MCF 10A (cell line): ENCODE measurements at regions of chr1 and their contacts with region 1.

Region 1: DNA sequence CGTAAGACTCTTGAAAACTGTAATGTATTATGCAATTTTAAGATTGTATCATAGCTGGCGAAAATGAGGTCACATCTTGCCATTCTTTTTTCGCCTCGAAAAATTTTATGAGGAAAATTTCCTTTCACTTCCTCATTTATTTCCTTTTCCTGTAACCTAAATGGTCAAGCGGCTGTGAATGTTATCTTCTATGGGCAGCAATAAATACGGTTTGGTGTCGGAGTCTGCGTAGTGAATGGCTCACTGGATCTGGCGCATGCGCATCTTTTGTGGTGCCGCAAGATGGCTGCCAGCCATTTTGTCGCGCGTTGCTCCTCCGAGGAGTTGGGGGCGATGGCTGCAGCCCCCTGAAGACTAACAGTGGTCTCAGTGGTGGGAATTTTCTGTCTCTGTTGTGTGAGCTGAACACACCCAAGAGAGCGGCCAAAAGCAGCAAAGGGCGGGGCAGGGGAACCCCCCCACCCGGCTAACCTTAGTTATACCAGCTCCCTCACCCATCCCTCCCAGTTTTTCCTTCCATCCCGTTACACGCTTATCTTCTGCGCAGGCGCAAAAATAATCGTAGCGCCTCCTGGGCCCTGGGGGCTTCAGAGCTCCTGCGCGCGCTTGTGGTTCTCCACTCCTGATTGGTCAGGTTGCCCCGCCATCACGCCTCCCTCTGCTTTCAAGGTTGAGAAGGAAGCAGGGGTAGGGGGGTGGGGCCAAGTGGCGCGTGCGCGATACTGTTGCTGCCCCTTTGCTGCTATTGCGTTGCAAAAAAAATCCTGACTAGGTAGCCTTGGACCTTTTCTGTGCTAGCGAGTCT is at the start of gene RPRD2:
- DNase-seq: peak; percentile 100
- H3K4me3 Mint-ChIP-seq: peak within 1 kb of the TSS; percentile 92
- H3K27ac Mint-ChIP-seq: peak within 1 kb of the TSS; percentile 97
- H3K4me1 Mint-ChIP-seq: peaks cover 19% of the 10 kb centered on the region
- H3K27me3 Mint-ChIP-seq: no peaks in the 10 kb centered on the region
- CTCF ChIP-seq: no peak
- total RNA-seq, gene RPRD2: 35.2 and 37.4 TPM in 2 replicates

Region 2: GRCh38 chr1:150259758-150260669 is 103.6 kb before region 1 on chr1:
- CTCF ChIA-PET with region 1: interaction called, 6 read pairs
- POLR2A ChIA-PET with region 1: interaction called, 20 read pairs
- intact Hi-C with region 1: no loop called
- DNase-seq: peak; percentile 89
- H3K4me3 Mint-ChIP-seq: peak overlapping the region; percentile 64
- H3K27ac Mint-ChIP-seq: peak overlapping the region; percentile 47
- H3K4me1 Mint-ChIP-seq: peaks cover 66% of the 10 kb centered on the region
- H3K27me3 Mint-ChIP-seq: no peaks in the 10 kb centered on the region
- CTCF ChIP-seq: no peak

Region 3: DNA sequence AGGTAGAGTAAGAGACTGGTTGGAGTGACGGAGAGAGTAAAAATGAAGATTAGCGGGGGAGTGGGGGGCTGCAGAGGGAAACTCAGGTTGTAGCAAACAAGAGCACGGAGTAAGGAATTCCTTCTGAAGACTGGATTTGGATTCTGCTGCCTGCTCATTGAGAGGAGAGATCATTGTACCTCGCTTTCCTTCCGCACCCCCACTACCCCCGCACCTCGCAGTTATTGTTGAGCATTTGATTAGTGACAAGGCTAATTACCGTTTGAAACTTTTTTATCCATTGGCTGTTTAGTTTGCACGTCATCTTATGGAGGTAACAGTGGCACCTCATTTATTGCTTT is 41.8 kb before region 1 on chr1:
- CTCF ChIA-PET with region 1: no interaction called
- POLR2A ChIA-PET with region 1: interaction called, 40 read pairs
- intact Hi-C with region 1: no loop called
- DNase-seq: no peak
- H3K4me3 Mint-ChIP-seq: peak overlapping the region; percentile 98
- H3K27ac Mint-ChIP-seq: peak overlapping the region; percentile 95
- H3K4me1 Mint-ChIP-seq: peaks cover 10% of the 10 kb centered on the region
- H3K27me3 Mint-ChIP-seq: no peaks in the 10 kb centered on the region
- CTCF ChIP-seq: no peak

Region 4: GRCh38 chr1:150352866-150353265 is 10.8 kb before region 1 on chr1:
- CTCF ChIA-PET with region 1: interaction called, 5 read pairs
- POLR2A ChIA-PET with region 1: interaction called, 14 read pairs
- intact Hi-C with region 1: no loop called
- DNase-seq: no peak
- H3K4me3 Mint-ChIP-seq: no peak overlapping the region
- H3K27ac Mint-ChIP-seq: no peak overlapping the region
- H3K4me1 Mint-ChIP-seq: no peaks in the 10 kb centered on the region
- H3K27me3 Mint-ChIP-seq: no peaks in the 10 kb centered on the region
- CTCF ChIP-seq: no peak

Region 5: DNA sequence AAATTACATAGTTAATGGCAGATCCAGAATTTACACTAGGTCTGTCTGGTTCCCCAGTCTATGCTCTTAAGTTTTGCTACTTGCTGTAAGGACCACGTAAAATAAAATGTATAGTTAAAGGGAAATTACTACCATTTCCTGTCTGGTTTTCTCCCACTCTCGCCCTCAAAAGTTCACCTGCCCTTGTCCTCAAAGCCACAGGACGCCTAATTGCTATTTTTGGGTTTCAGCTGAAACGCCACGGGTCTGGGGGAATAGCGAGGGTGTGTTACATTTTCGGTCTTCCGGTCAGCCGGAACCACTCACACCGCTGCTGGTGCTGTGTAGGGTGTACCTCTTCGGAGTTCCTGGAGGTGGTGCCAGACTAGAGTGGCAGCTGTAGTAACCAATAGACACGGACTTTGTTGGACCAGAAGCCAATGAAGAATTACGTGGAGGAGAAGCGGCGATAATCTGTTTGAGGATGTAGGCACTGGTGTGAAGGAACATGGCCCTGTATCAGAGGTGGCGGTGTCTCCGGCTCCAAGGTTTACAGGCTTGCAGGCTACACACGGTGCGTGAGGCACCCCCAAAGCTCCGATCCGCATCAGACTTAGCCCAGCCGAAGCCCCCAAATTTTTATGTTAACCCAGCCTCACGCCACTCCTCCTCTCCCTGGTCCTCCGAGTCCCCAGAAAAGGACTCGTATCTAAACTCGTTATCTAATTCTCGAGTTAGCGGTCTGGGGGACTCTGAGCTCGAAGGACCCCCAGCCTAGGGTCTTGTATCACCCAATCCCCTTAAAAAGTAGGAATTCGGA is 123.5 kb after region 1 on chr1 and contains the start of gene TARS2:
- CTCF ChIA-PET with region 1: no interaction called
- POLR2A ChIA-PET with region 1: interaction called, 19 read pairs
- intact Hi-C with region 1: no loop called
- DNase-seq: peak; percentile 100
- H3K4me3 Mint-ChIP-seq: peak within 1 kb of the TSS; percentile 99
- H3K27ac Mint-ChIP-seq: peak within 1 kb of the TSS; percentile 93
- H3K4me1 Mint-ChIP-seq: peaks cover 14% of the 10 kb centered on the region
- H3K27me3 Mint-ChIP-seq: no peaks in the 10 kb centered on the region
- CTCF ChIP-seq: no peak
- total RNA-seq, gene TARS2: 43.1 and 65.3 TPM in 2 replicates

Region 6: GRCh38 chr1:150567717-150568593 is 204.3 kb after region 1 on chr1:
- CTCF ChIA-PET with region 1: no interaction called
- POLR2A ChIA-PET with region 1: interaction called, 32 read pairs
- intact Hi-C with region 1: no loop called
- DNase-seq: peak; percentile 100
- H3K4me3 Mint-ChIP-seq: peak overlapping the region; percentile 52
- H3K27ac Mint-ChIP-seq: peak overlapping the region; percentile 99
- H3K4me1 Mint-ChIP-seq: peaks cover 64% of the 10 kb centered on the region
- H3K27me3 Mint-ChIP-seq: no peaks in the 10 kb centered on the region
- CTCF ChIP-seq: peak; percentile 6